IMR-90 (cell line): ENCODE measurements at regions of chr17 and their contacts with region 1.

Region 1: DNA sequence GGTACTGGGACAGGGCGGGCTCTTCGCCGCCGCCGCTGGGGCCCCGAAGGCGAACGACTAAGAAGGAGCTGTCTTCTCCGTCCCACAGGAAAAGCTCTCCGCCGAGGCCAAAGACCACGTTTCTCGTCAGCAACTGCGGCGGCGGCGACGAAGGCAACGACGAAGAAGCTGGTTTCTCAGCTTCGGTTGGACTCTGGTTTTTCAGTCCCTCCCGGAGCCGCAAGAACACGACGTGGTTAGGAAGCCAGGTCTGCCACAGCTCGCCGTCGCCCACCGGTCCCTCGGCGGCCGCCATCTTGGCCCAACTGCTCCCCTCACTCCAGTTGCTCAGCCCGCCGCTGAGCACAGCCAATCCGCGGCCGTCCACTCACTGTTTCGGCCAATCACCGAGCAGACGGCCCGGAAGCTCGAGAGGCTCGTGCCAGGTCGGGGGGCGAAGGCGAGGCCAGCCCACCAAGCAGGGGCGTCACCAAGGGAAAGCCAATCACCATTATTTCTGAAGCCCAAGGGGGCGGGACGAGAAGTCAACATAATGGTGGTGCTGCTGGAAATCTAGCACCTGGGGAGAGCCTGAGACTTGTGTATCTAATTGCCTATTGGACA is at the start of gene NUP88:
- DNase-seq: peak; percentile 97
- ATAC-seq: peak; percentile 96
- H3K4me3 ChIP-seq: peak within 1 kb of the TSS; percentile 76
- H3K27ac ChIP-seq: peak within 1 kb of the TSS; percentile 80
- H3K4me1 ChIP-seq: peaks cover 2% of the 10 kb centered on the region
- H3K27me3 ChIP-seq: no peaks in the 10 kb centered on the region
- CTCF ChIP-seq: no peak
- POLR2A ChIP-seq: peak; percentile 94
- RAD21 ChIP-seq: no peak
- total RNA-seq, gene NUP88: 80.5 and 83.7 TPM in 2 replicates

Region 2: DNA sequence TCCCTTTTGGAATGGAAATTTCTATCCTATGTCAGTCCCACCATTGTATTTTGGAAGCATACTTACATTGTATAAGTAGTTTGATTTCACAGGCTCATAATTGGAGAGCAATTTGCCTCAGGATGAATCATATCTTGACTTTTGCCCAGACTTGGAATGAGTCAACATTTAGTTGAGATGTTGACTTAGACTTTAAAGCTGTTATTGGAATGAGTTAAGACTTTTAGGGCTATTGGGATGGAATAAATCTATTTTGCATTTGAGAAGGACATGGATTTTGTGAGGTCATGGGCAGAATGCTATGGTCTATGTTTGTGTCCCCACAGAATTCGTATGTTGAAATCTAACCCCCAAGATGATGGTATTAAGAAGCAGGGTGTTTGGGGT is 215.6 kb before region 1 on chr17:
- CTCF ChIA-PET with region 1: no interaction called
- POLR2A ChIA-PET with region 1: no interaction called
- dilution Hi-C with region 1: no loop called
- in situ Hi-C with region 1: no loop called
- intact Hi-C with region 1: no loop called
- DNase-seq: peak; percentile 79
- ATAC-seq: peak; percentile 65
- H3K4me3 ChIP-seq: no peak overlapping the region
- H3K27ac ChIP-seq: no peak overlapping the region
- H3K4me1 ChIP-seq: peaks cover 4% of the 10 kb centered on the region; the same call in 1 of the 2 replicates
- H3K27me3 ChIP-seq: no peaks in the 10 kb centered on the region
- CTCF ChIP-seq: no peak
- POLR2A ChIP-seq: no peak
- RAD21 ChIP-seq: no peak

Region 3: GRCh38 chr17:5281814-5282653 is 137.4 kb before region 1 on chr17 and contains the start of gene RABEP1:
- CTCF ChIA-PET with region 1: no interaction called
- POLR2A ChIA-PET with region 1: no interaction called
- dilution Hi-C with region 1: no loop called
- in situ Hi-C with region 1: no loop called
- intact Hi-C with region 1: loop called (anchors 10 kb)
- DNase-seq: peak; percentile 88
- ATAC-seq: peak; percentile 94
- H3K4me3 ChIP-seq: peak within 1 kb of the TSS; percentile 82
- H3K27ac ChIP-seq: peak within 1 kb of the TSS; percentile 61
- H3K4me1 ChIP-seq: peaks cover 6% of the 10 kb centered on the region
- H3K27me3 ChIP-seq: no peaks in the 10 kb centered on the region
- CTCF ChIP-seq: no peak; the same call in 1 of the 2 replicates
- POLR2A ChIP-seq: peak; percentile 83
- RAD21 ChIP-seq: no peak
- total RNA-seq, gene RABEP1: 38.2 and 40.0 TPM in 2 replicates

Region 4: GRCh38 chr17:5438716-5439445 is 19.4 kb after region 1 on chr17 and contains the start of gene C1QBP:
- CTCF ChIA-PET with region 1: interaction called, 10 read pairs
- POLR2A ChIA-PET with region 1: no interaction called
- dilution Hi-C with region 1: no loop called
- in situ Hi-C with region 1: no loop called
- intact Hi-C with region 1: no loop called
- DNase-seq: peak; percentile 89
- ATAC-seq: peak; percentile 94
- H3K4me3 ChIP-seq: peak within 1 kb of the TSS; percentile 82
- H3K27ac ChIP-seq: peak within 1 kb of the TSS; percentile 69
- H3K4me1 ChIP-seq: peaks cover 7% of the 10 kb centered on the region
- H3K27me3 ChIP-seq: no peaks in the 10 kb centered on the region
- CTCF ChIP-seq: peak; percentile 99
- POLR2A ChIP-seq: no peak; the same call in 1 of the 2 replicates
- RAD21 ChIP-seq: peak; percentile 72
- total RNA-seq, gene C1QBP: 173 and 267 TPM in 2 replicates